AG04450 (cell line): ENCODE measurements at regions of chr6 and their contacts with region 1.

Region 1: GRCh38 chr6:45714741-45715507 is 300.7 kb downstream of the CLIC5 start:
- DNase-seq: peak; percentile 69
- H3K4me3 ChIP-seq: no peak overlapping the region
- H3K27ac ChIP-seq: peak overlapping the region; percentile 21
- H3K27me3 ChIP-seq: no peaks in the 10 kb centered on the region
- CTCF ChIP-seq: peak; percentile 92

Region 2: DNA sequence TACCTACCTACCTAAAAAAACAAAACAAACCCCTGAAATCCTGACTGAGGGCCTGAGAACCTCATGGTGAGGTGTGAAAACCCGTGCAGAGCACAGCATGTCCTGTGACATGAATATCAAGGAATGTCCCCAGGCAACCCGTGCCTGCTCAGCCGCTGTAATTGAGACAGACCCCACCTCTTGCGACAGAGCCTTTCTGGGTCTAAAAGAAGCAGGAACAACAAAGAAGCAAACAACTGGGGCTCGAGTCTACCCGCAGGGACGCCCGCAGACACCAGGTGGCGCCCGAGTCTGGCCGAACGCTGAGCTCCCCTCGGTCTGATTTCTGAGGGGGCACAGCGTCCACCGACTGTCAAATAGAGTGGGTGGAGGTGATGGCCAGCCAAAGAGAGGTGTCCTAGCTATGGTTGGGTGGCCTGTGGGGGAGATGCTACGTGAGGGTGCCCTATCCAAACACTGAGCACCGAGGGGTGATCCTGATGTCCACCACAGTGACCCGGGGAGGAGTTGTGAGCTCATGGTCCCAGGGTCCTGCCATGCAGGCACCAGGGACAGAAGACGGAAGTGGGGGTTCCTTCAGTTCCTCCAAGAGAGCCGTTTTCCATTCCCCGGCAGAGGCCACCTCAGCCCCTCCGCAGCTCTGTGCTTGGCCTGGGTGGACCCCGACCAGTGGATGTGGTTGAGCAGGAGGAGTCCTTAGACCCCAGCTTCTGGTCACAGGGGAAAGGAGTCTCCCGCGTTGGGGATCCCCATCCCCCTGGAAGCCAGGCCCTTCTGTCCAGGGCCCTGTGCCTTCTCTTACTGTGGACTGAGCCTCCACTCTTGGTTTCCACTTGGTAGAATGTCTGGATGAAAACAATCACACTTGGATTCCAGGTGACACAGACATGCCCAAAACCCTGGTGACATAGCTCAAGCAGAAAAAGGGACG is 1059.2 kb before region 1 on chr6:
- CTCF ChIA-PET with region 1: interaction called, 16 read pairs
- POLR2A ChIA-PET with region 1: no interaction called
- DNase-seq: no peak
- H3K4me3 ChIP-seq: no peak overlapping the region; the same call in 1 of the 2 replicates
- H3K27ac ChIP-seq: no peak overlapping the region
- H3K27me3 ChIP-seq: peaks cover 4% of the 10 kb centered on the region
- CTCF ChIP-seq: peak; percentile 92

Region 3: GRCh38 chr6:45421709-45422502 is 293.0 kb before region 1 on chr6:
- CTCF ChIA-PET with region 1: interaction called, 15 read pairs
- POLR2A ChIA-PET with region 1: interaction called, 3 read pairs
- DNase-seq: no peak
- H3K4me3 ChIP-seq: peak overlapping the region; percentile 94
- H3K27ac ChIP-seq: peak overlapping the region; percentile 75
- H3K27me3 ChIP-seq: no peaks in the 10 kb centered on the region
- CTCF ChIP-seq: peak; percentile 55

Region 4: DNA sequence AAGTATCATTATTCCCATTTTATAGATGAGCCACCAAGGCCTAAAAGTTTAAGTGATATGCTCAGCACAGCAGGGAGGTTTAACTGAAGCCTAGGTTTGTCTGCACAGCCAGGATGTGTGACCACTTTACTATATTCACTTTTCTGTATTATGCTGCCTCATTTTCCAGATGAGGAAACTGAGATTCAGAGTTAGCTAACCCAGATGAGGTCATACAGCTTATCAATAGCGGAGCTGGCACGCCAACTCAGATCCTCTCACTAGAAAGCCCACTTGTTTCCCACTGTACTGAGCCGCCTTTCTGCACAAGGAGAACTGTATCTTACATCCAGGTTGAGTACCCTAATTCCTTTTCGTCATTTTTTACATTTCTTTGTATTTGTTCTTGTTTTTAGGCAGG is 205.5 kb before region 1 on chr6:
- CTCF ChIA-PET with region 1: interaction called, 10 read pairs
- POLR2A ChIA-PET with region 1: no interaction called
- DNase-seq: no peak
- H3K4me3 ChIP-seq: no peak overlapping the region
- H3K27ac ChIP-seq: no peak overlapping the region
- H3K27me3 ChIP-seq: no peaks in the 10 kb centered on the region
- CTCF ChIP-seq: no peak

Region 5: GRCh38 chr6:45703041-45703739 is 11.7 kb before region 1 on chr6:
- CTCF ChIA-PET with region 1: interaction called, 46 read pairs
- POLR2A ChIA-PET with region 1: no interaction called
- DNase-seq: peak; percentile 15
- H3K4me3 ChIP-seq: no peak overlapping the region
- H3K27ac ChIP-seq: no peak overlapping the region
- H3K27me3 ChIP-seq: no peaks in the 10 kb centered on the region
- CTCF ChIP-seq: no peak

Region 6: DNA sequence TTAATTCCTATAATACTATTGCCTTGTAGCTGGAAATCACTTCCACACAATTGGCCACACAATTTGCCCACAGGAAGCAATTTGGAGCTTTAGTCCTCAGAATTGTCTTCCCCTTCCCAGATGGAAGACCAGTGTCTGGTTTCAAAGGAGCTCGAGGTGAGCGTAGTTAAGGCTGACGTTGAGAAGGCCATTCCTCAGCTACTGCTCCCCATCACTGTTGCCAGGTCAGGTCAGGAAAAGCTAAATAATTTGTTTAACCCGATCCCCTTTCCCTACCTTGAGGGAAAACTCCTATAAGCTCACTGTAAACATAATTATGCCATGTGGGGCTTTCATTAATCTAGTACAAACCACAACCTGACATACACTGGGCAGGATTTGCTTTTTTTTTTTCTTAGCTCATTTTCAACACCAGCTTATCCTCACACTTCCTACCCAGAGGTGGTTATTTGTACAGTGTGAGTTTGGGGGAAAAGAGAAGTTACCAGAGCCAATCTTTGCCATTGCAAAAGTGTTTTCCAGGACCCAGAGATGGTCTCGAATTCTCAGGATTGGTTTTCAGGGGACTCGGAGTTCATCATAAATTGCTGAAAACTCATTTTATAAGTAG is 58.1 kb after region 1 on chr6:
- CTCF ChIA-PET with region 1: no interaction called
- POLR2A ChIA-PET with region 1: no interaction called
- DNase-seq: no peak
- H3K4me3 ChIP-seq: no peak overlapping the region
- H3K27ac ChIP-seq: no peak overlapping the region
- H3K27me3 ChIP-seq: peaks cover 19% of the 10 kb centered on the region
- CTCF ChIP-seq: no peak